Heart left ventricle (tissue), 16 donors: ENCODE measurements at regions of chr2 and their contacts with region 1.

Region 1: GRCh38 chr2:221573430-221574230 is 1.5 kb upstream of the EPHA4 start:
- DNase-seq: peak; percentile 81 to 92 (median 86)
- ATAC-seq: peak; percentile 69 to 85 (median 82)
- H3K4me3 ChIP-seq: peak overlapping the region; percentile 58 to 89 (median 76)
- H3K27ac ChIP-seq: peak overlapping the region; percentile 72 to 94 (median 86)
- H3K4me1 ChIP-seq: peaks cover 0 to 38% (median 16%) of the 10 kb centered on the region in 12 donors
- H3K27me3 ChIP-seq: peaks cover 0 to 53% (median 2%) of the 10 kb centered on the region in 9 donors
- CTCF ChIP-seq: peak; percentile 93 to 99 (median 98)
- POLR2A ChIP-seq: no peak

Region 2: DNA sequence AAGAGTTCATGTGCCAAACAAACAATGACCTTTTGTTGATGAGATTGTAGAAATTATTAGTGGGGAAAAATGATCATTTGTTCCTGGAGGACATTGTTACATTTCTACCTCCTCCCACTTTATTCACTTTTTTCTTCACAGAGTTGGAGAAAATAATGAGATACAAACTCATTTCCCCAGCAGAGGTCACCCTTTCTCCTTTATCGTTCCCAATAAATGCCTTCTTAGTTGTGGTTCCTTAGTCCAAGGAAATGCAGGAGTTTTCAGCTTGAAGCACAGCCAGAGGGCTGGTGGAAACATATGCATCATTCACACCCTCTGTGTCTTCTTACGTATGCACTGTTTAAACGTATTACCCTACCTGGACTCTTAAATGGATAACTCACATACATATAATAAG is 1837.4 kb before region 1 on chr2:
- intact Hi-C with region 1: loop called in 9 of 10 experiments (anchors 2 to 10 kb)
- DNase-seq: no peak
- ATAC-seq: peak; percentile 40 to 75 (median 56)
- H3K4me3 ChIP-seq: no peak overlapping the region
- H3K27ac ChIP-seq: no peak overlapping the region
- H3K4me1 ChIP-seq: peaks cover 0 to 12% (median 2%) of the 10 kb centered on the region in 12 donors
- H3K27me3 ChIP-seq: peaks cover 0 to 4% (median 0%) of the 10 kb centered on the region in 9 donors
- CTCF ChIP-seq: peak; percentile 21 to 71 (median 54)
- POLR2A ChIP-seq: no peak

Region 3: GRCh38 chr2:220104871-220105351 is 1468.7 kb before region 1 on chr2:
- intact Hi-C with region 1: loop called in 2 of 10 experiments (anchors 5 to 10 kb)
- DNase-seq: peak in 3 of 5 donors; percentile 15 to 44 (median 21)
- ATAC-seq: peak; percentile 81 to 93 (median 88)
- H3K4me3 ChIP-seq: no peak overlapping the region
- H3K27ac ChIP-seq: no peak overlapping the region
- H3K4me1 ChIP-seq: peaks cover 0 to 10% (median 1%) of the 10 kb centered on the region in 12 donors
- H3K27me3 ChIP-seq: peaks cover 0 to 4% (median 0%) of the 10 kb centered on the region in 9 donors
- CTCF ChIP-seq: peak in 5 of 12 donors; percentile 16 to 38 (median 25)
- POLR2A ChIP-seq: no peak

Region 4: GRCh38 chr2:220687231-220687843 is 886.3 kb before region 1 on chr2:
- intact Hi-C with region 1: loop called (anchors 1 to 5 kb)
- DNase-seq: peak; percentile 53 to 70 (median 65)
- ATAC-seq: peak; percentile 75 to 89 (median 82)
- H3K4me3 ChIP-seq: no peak overlapping the region
- H3K27ac ChIP-seq: no peak overlapping the region
- H3K4me1 ChIP-seq: no peaks in the 10 kb centered on the region
- H3K27me3 ChIP-seq: no peaks in the 10 kb centered on the region
- CTCF ChIP-seq: peak; percentile 86 to 93 (median 88)
- POLR2A ChIP-seq: no peak

Region 5: DNA sequence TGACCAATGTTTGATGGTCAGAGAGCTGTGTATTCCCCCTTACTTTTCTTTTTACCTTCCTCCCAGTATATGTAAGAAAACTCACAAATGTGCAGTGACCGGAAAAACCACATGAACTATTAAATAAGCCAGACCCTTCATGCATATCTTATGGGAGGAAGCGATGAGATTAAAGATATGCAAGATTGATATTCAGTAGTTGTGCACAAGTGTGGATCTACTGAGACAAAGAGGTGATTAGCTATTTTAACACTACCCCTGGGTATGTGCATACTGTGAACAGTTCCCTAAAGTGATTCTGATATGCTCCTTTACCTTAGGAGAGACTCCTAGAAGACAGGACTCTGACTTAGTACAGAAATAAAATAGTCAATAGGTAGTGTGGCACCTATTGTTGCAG is 329.9 kb before region 1 on chr2:
- intact Hi-C with region 1: loop called in 1 of 10 experiments (anchors 10 kb)
- DNase-seq: no peak
- ATAC-seq: no peak
- H3K4me3 ChIP-seq: no peak overlapping the region
- H3K27ac ChIP-seq: no peak overlapping the region
- H3K4me1 ChIP-seq: peaks cover 0 to 4% (median 0%) of the 10 kb centered on the region in 12 donors
- H3K27me3 ChIP-seq: no peaks in the 10 kb centered on the region
- CTCF ChIP-seq: no peak
- POLR2A ChIP-seq: no peak

Region 6: GRCh38 chr2:221377066-221377465 is 196.6 kb before region 1 on chr2:
- intact Hi-C with region 1: no loop called
- DNase-seq: no peak
- ATAC-seq: no peak
- H3K4me3 ChIP-seq: no peak overlapping the region
- H3K27ac ChIP-seq: no peak overlapping the region
- H3K4me1 ChIP-seq: no peaks in the 10 kb centered on the region
- H3K27me3 ChIP-seq: no peaks in the 10 kb centered on the region
- CTCF ChIP-seq: no peak
- POLR2A ChIP-seq: no peak

Region 7: GRCh38 chr2:221444106-221444505 is 129.5 kb before region 1 on chr2:
- intact Hi-C with region 1: loop called in 8 of 10 experiments (anchors 5 to 10 kb)
- DNase-seq: peak in 4 of 5 donors; percentile 29 to 74 (median 62)
- ATAC-seq: peak; percentile 84 to 98 (median 94)
- H3K4me3 ChIP-seq: no peak overlapping the region
- H3K27ac ChIP-seq: peak overlapping the region in 10 of 12 donors; percentile 10 to 76 (median 40)
- H3K4me1 ChIP-seq: peaks cover 0 to 27% (median 12%) of the 10 kb centered on the region in 12 donors
- H3K27me3 ChIP-seq: no peaks in the 10 kb centered on the region
- CTCF ChIP-seq: no peak
- POLR2A ChIP-seq: no peak

Region 8: DNA sequence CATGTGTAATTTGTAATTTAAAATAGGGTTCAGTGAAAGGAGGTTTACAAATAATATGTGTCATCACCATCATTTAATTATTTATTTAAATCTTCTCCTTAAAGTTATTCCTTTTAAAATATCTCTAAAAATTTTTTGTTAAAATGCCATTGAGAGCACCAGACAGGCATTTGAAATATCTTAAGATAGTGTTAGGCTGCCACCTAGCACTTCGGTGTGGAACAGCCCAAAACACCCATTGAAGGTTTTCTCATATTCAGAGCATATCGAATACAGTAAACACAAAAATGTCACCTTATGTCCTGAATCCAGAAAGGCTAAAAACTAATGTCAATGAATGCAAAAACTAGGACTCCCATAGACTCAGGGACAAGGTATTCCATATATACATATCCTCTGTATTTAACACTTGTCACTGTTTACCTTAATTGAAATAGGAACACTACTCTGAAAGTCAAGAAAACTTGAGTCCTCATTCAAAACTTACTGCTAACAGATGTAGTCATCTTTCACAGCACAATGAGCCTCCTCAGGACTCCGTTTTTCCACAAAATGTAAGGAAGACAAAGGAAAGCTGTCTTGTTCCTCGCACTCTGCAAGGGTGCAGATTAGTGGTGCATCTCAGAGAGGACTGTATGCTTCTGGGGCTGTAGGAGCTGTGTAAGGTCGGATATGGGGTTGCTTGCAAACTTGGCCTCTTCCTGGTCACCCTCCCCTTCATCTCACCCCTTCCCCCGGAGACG is 395.6 kb after region 1 on chr2:
- intact Hi-C with region 1: loop called in 5 of 10 experiments (anchors 5 to 10 kb)
- DNase-seq: no peak
- ATAC-seq: peak in 3 of 4 donors; percentile 44 to 62 (median 62)
- H3K4me3 ChIP-seq: no peak overlapping the region
- H3K27ac ChIP-seq: no peak overlapping the region
- H3K4me1 ChIP-seq: no peaks in the 10 kb centered on the region
- H3K27me3 ChIP-seq: peaks cover 0 to 24% (median 0%) of the 10 kb centered on the region in 9 donors
- CTCF ChIP-seq: peak; percentile 37 to 80 (median 62)
- POLR2A ChIP-seq: no peak